Ascending aorta (tissue), 2 donors: ENCODE measurements at regions of chr5 and their contacts with region 1.

Region 1: GRCh38 chr5:52893105-52893504 is 96.0 kb upstream of the ITGA2 start:
- DNase-seq: no peak
- H3K4me3 ChIP-seq: no peak overlapping the region
- H3K27ac ChIP-seq: peak overlapping the region; percentile 80 to 83
- H3K4me1 ChIP-seq: peaks cover 25 to 41% of the 10 kb centered on the region in 2 donors
- H3K27me3 ChIP-seq: no peaks in the 10 kb centered on the region
- CTCF ChIP-seq: no peak

Region 2: GRCh38 chr5:52799983-52800393 is 93.1 kb before region 1 on chr5:
- intact Hi-C with region 1: loop called (anchors 5 kb)
- DNase-seq: peak; percentile 78 to 96
- H3K4me3 ChIP-seq: peak overlapping the region; percentile 83
- H3K27ac ChIP-seq: peak overlapping the region; percentile 96 to 100
- H3K4me1 ChIP-seq: peaks cover 5 to 57% of the 10 kb centered on the region in 2 donors
- H3K27me3 ChIP-seq: no peaks in the 10 kb centered on the region
- CTCF ChIP-seq: no peak

Region 3: GRCh38 chr5:52948418-52949076 is 55.4 kb after region 1 on chr5:
- intact Hi-C with region 1: no loop called
- DNase-seq: peak in 1 of 2 donors; percentile 69
- H3K4me3 ChIP-seq: no peak overlapping the region
- H3K27ac ChIP-seq: peak overlapping the region in 1 of 2 donors; percentile 33
- H3K4me1 ChIP-seq: peaks cover 0 to 2% of the 10 kb centered on the region in 2 donors
- H3K27me3 ChIP-seq: no peaks in the 10 kb centered on the region
- CTCF ChIP-seq: peak; percentile 57 to 71 (median 66)

Region 4: GRCh38 chr5:53095931-53096525 is 202.9 kb after region 1 on chr5:
- intact Hi-C with region 1: no loop called
- DNase-seq: peak in 1 of 2 donors; percentile 83
- H3K4me3 ChIP-seq: no peak overlapping the region
- H3K27ac ChIP-seq: no peak overlapping the region
- H3K4me1 ChIP-seq: peaks cover 0 to under 1% of the 10 kb centered on the region in 2 donors
- H3K27me3 ChIP-seq: no peaks in the 10 kb centered on the region
- CTCF ChIP-seq: peak; percentile 73 to 86 (median 81)

Region 5: GRCh38 chr5:53151713-53152458 is 258.8 kb after region 1 on chr5:
- intact Hi-C with region 1: no loop called
- DNase-seq: peak in 1 of 2 donors; percentile 69
- H3K4me3 ChIP-seq: no peak overlapping the region
- H3K27ac ChIP-seq: no peak overlapping the region
- H3K4me1 ChIP-seq: peaks cover 0 to 2% of the 10 kb centered on the region in 2 donors
- H3K27me3 ChIP-seq: no peaks in the 10 kb centered on the region
- CTCF ChIP-seq: no peak